ENCODE measurements at regions of chr2 and their contacts with region 1.

Region 1: GRCh38 chr2:172253190-172254052 is 150.7 kb upstream of the DLX2 start:
- DNase-seq: no peak

Region 2: GRCh38 chr2:171957061-171957460 is 296.4 kb before region 1 on chr2:
- intact Hi-C with region 1: no loop called
- DNase-seq: no peak

Region 3: GRCh38 chr2:172196768-172197431 is 56.5 kb before region 1 on chr2:
- intact Hi-C with region 1: no loop called
- DNase-seq: no peak

Region 4: DNA sequence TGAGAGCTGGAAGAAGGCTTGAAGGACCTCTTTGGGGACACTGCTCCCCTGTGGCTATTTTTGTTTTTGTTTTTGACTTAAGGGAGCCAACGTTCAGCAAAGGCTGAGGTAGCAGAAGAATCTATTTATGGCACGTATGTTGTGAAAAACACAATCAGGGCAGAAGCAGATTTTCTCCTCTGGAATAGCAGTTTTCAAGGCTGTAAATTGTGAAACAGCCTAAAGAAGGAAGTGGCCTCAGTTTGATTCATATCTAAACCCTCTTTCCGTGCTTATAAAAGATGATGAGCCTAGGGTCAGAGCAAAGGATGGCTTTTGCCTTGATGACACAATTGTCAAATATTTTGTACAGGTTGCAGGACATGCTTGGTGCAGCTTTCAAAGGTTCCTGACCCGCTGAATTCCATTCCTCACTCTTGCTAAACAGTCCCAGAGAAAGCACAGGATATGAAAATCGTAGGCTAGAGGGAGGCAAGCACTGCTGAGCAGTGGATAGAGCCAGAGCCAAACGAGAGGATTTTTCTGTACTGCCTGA is 44.6 kb before region 1 on chr2:
- intact Hi-C with region 1: no loop called
- DNase-seq: no peak

Region 5: DNA sequence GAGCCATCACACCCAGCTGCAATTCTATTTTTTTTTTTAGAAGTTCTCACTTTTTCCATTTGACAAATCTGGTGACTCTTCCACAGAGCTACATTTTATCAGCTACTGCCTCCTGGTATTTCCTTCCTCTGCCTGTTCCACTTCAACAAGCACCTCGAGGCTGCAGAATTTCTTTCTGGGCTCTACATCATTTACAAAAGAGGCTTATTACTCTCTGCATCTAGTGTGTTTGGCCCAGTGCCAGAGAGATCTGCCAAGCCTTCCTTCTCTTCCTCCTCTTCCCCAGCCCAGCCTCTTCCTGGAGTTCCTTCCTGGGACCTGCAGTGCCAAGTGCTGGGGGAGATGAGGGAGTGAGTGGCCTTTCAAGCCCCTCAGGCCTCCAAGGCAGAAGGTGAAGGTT is 54.4 kb after region 1 on chr2:
- intact Hi-C with region 1: loop called (anchors 5 kb)
- DNase-seq: no peak

Region 6: DNA sequence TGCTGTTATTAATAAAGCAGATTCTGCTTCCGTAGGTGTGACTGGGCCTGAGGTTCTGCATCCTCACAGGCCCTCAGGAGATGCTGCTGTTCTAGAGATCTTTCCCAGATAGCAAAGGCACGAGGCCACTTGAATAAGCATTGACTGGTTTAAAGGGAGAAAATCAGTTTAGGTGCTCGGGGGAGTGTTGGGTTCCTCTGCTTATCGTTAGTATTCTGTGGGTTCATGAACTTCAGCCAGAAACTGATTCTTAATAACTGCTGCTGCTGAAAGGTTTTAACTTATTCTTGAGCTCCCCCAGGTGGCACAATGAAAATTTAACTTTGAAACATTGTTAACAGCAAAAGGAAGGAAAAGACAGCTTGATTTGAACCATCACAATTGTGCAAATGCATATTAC is 230.8 kb after region 1 on chr2:
- intact Hi-C with region 1: loop called (anchors 5 kb)
- DNase-seq: no peak

Measured in cardiac septum (tissue), 1 donor.